Sigmoid colon (tissue), 7 donors: ENCODE measurements at regions of chr6 and their contacts with region 1.

Region 1: DNA sequence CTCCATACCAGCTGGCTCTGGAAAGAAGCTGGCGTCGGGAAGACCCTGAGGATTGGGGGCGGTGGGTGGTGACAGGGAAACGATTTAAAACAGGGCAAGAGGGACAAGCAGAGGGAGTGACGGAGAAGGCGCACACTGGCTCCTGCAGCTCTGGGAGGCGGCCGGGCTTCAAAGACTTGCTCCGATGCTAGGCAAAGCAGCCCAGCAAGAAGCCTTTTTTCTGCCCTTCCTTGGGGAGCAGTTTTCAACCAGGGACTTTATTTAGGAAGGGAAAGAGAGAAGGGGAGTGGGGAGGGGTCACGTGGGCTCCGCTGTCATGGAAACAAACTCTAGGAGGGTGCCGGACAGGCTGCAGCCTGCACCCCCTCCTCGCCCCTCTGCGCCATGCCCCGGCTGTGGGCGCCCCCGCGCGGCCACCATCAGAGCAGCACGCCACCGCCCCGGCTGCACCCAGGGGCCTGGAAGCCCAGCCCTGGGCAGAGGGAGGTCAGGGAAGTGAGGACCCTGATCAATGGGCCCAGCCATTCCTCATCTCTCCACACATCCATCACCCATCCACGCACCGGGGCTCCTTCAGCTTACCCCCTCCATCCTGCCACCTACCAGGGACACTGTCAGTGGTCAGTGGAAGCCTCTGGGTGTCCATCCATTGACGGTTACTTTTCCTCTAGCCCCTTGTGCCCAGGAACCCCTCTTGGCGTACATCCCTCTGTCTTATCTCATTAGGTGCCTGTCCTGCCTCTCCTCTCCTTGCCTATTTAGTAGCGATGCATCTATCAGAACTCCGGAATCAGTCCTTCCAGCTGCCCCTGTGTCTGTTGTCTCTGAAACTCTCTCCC is 66.6 kb upstream of the CCDC167 start:
- DNase-seq: no peak
- H3K4me3 ChIP-seq: peak overlapping the region; percentile 18 to 48 (median 31)
- H3K27ac ChIP-seq: no peak overlapping the region
- H3K4me1 ChIP-seq: peaks cover 0 to 12% (median 9%) of the 10 kb centered on the region in 4 donors
- H3K27me3 ChIP-seq: peaks cover 0 to 41% (median 9%) of the 10 kb centered on the region in 3 donors
- CTCF ChIP-seq: peak; percentile 70 to 88 (median 77)
- EP300 ChIP-seq: no peak
- POLR2A ChIP-seq: no peak

Region 2: DNA sequence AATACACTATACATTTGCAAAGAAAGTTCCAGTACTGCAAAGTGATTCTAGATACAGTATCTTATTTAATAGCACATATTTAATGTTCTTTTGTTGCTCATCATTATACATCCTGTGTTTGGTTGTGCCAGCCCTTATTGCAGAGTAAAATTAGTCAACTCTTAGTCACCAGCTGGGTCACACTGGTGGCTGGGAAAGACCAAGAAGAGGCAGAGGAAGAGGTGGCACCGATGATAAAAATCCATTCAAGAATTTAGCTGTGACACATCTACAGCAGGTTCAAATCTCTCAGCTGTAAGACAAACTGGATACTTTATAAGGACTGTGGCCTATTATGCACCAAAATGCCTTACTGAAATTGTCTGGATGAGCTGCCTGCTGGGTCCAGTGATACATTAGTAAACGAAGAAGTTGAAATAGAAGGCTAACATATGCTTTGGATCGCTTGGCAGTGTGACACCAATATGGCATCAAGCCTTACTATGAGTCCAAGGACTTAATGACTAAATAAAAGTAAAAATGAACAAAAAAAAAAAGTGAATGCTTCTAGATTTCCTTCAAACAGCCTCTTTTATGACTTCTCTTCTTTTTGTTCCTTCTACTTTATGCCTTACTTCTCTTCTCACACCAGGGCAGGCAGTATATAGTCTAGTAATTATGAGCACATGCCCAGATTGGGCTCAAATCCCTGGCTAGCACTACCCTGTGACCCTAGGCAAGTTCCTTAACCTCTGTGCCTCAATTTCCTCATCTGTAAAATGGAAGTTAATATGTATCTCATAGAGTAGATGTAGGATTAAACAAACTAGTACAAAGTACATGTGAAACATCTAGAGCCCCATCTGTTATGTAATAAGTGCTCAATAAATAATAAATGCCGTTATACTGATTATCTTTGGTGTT is 241.9 kb before region 1 on chr6:
- intact Hi-C with region 1: loop called (anchors 2 kb)
- DNase-seq: no peak
- H3K4me3 ChIP-seq: no peak overlapping the region
- H3K27ac ChIP-seq: peak overlapping the region in 3 of 4 donors; percentile 3 to 56 (median 44)
- H3K4me1 ChIP-seq: peaks cover 0 to 25% (median 21%) of the 10 kb centered on the region in 4 donors
- H3K27me3 ChIP-seq: no peaks in the 10 kb centered on the region
- CTCF ChIP-seq: no peak
- EP300 ChIP-seq: no peak
- POLR2A ChIP-seq: no peak

Region 3: GRCh38 chr6:37381579-37381978 is 184.8 kb before region 1 on chr6:
- intact Hi-C with region 1: loop called (anchors 5 kb)
- DNase-seq: no peak
- H3K4me3 ChIP-seq: no peak overlapping the region
- H3K27ac ChIP-seq: no peak overlapping the region
- H3K4me1 ChIP-seq: no peaks in the 10 kb centered on the region
- H3K27me3 ChIP-seq: no peaks in the 10 kb centered on the region
- CTCF ChIP-seq: peak in 3 of 4 experiments; percentile 25 to 52 (median 38)
- EP300 ChIP-seq: no peak
- POLR2A ChIP-seq: no peak

Region 4: DNA sequence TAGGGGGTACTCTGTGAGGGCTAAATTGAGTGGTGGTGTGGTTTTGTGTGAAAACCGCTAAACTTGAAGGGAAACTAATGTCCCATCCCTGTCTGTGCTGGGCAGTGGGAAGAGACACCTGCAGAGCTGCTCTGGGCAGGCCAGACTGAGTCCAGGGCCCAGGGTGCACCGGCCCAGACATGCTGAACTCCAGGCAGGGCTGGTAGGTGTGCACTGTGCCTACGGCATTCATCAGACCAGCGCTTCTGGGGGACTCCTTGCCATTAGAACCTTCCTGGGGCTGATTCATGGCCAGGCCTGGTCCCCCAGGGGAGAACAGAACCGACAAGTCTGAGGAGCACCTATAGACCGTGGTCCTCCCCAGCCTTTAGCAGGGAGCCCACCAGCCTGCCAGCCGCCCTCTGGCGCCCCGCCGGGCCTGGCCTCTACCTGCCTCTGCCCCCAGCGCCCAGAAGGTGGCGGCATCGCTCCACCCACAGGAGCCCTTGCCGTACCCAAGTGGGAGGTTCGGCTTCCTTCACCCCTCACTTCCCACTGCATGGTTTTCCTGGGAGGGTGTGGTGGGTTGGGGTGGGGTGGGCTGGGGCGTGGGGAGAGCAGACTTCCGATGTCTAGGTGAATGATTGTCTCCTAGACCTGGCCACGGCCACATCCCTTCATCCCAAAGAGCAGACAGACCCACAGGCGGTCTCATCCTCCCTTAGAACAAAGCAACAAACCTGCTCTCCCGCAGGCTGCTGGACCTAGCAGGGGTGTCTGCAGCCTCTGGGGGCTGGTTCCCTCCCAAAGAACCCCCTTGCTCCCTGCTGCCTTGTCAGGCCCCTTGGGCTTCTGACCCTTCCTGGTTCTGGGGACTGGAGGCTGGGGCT is 82.2 kb before region 1 on chr6:
- intact Hi-C with region 1: loop called (anchors 2 kb)
- DNase-seq: no peak
- H3K4me3 ChIP-seq: no peak overlapping the region
- H3K27ac ChIP-seq: no peak overlapping the region
- H3K4me1 ChIP-seq: peaks cover 0 to 26% (median 15%) of the 10 kb centered on the region in 4 donors
- H3K27me3 ChIP-seq: no peaks in the 10 kb centered on the region
- CTCF ChIP-seq: peak; percentile 29 to 68 (median 44)
- EP300 ChIP-seq: no peak
- POLR2A ChIP-seq: no peak